Astrocyte of the cerebellum (primary cell): ENCODE measurements at regions of chr5 and their contacts with region 1.

Region 1: GRCh38 chr5:59810041-59810440 is 83.5 kb downstream of the PDE4D start:
- DNase-seq: peak; percentile 62
- H3K4me3 ChIP-seq: peak overlapping the region; percentile 11
- CTCF ChIP-seq: peak; percentile 86

Region 2: GRCh38 chr5:59628062-59628828 is 181.8 kb before region 1 on chr5:
- in situ Hi-C with region 1: no loop called
- DNase-seq: no peak
- H3K4me3 ChIP-seq: no peak overlapping the region
- CTCF ChIP-seq: no peak

Region 3: DNA sequence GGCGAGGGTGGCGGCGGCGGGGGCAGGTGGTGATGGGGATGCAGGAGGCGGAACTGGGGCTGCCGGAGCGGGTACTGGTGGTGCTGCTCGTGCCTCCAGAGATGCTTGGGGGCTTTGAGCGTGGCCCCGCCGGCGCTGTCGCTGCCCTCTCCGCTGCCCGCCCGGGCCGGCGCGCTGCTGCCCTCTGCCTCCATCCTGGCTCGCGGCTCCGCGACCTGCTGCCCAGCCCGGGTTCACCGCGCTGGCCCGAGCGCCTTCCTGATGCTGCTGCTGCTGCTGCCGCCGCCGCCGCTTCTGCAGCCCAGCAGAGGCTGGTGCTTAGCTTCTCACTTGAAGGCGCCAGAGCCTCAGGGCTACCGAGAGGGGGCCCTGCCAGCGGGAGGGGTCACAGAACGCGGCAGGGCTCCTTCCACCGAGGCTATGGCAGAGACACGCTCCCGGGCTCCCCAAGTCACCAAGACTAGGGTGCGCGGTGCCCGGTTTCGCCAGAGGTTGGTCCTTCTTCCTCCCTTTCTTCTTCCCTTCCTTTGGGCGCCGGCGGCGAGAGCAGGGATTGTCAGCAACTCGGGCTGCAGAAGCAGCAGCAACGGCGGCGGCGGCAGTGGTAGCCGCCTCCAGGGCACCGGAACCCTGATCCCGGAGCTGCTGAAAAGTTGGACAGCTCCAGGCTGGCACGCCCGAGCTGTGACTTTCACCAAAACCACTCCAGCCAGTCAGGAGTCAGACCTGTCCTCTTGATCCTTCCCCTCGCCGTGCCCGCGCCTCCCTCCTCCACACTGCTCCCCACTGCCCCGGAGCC is 83.6 kb after region 1 on chr5 and contains the start of gene PDE4D:
- in situ Hi-C with region 1: no loop called
- DNase-seq: peak; percentile 38
- H3K4me3 ChIP-seq: peak within 1 kb of the TSS; percentile 44
- CTCF ChIP-seq: peak; percentile 17

Region 4: DNA sequence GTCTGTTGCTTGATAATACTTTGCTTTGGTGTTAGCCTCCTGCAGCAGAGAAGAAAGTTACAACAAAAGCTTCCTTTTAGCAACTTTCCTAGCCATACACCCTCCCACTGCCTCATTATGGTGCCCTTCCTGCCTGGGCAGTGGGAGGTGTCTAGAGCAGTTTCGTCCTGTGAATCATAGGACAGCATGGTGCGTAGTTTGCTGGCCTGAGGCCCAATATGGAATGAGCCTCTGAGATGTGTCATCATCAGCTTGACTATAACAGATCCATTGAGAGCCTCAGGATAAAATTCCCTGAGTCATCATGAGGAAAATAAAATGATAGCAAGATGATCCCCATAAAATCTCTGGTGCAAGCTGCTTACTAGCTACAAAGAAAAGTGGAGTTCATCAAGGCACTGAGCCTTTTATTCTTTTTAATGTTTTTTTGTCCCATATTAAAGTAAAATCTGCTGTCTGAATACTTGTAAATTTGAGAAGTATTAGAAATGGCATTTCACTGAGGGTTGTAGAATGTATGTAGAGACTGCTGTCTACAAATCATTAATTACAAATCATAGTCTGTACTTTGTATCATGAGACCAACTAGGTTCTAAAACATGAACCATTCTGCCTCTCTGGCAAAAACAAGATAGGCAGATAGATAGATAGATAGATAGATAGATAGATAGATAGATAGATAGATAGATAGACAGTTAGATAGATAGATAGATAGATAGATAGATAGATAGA is 386.5 kb after region 1 on chr5:
- in situ Hi-C with region 1: loop called (anchors 25 kb)
- DNase-seq: peak; percentile 88
- H3K4me3 ChIP-seq: no peak overlapping the region
- CTCF ChIP-seq: no peak

Region 5: GRCh38 chr5:60362158-60362557 is 552.1 kb after region 1 on chr5:
- in situ Hi-C with region 1: loop called (anchors 25 kb)
- DNase-seq: peak; percentile 16
- H3K4me3 ChIP-seq: no peak overlapping the region
- CTCF ChIP-seq: no peak